ENCODE measurements at regions of chr3 and their contacts with region 1.

Region 1: DNA sequence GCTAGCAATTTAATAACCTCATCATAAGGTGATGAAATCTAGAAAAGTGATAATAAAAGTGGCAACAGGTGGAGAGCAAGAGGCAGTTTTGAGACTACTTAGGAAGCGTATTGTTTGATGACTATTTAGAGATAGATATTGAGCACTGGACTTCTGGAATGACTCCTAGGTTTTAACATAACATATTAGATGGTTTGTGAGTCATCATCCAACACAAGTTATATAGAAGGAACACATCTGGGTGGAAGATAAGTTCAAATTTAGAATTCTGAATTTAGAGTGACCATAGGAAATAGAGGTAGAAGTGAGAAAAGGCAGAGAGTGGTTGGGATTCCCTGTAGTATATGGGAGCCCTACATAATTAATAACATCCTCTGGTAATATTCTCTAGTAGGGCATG is 282.8 kb upstream of the ALCAM start:
- DNase-seq: no peak
- H3K4me3 ChIP-seq: no peak overlapping the region
- H3K4me3 Mint-ChIP-seq: no peak overlapping the region
- H3K27ac ChIP-seq: no peak overlapping the region
- H3K27ac Mint-ChIP-seq: no peak overlapping the region
- H3K4me1 ChIP-seq: no peaks in the 10 kb centered on the region
- H3K4me1 Mint-ChIP-seq: no peaks in the 10 kb centered on the region
- H3K27me3 ChIP-seq: no peaks in the 10 kb centered on the region
- H3K27me3 Mint-ChIP-seq: peaks cover 0 to 4% of the 10 kb centered on the region in 2 donors

Region 2: DNA sequence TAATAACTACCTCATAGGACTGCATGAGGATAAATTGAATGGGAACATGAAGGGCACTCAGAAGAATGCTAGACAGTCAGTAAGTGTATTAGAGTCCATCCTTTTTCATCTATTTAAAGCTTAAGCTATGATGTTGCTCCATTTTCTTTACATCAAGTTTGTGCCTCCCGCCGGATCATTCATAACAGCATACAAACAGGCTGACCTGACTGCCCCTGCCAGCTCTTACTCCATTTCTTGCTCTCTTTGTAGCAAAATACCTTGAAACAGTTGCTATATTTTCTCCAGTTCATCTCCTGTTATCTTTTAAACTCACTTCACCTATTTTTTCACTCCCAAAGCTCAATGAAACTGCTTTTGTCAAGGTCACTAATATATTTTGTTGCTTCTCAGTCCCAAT is 32.8 kb before region 1 on chr3:
- CTCF ChIA-PET with region 1: no interaction called
- POLR2A ChIA-PET with region 1: no interaction called
- DNase-seq: no peak
- H3K4me3 ChIP-seq: no peak overlapping the region
- H3K4me3 Mint-ChIP-seq: no peak overlapping the region
- H3K27ac ChIP-seq: no peak overlapping the region
- H3K27ac Mint-ChIP-seq: peak overlapping the region in 1 of 8 donors; percentile 8
- H3K4me1 ChIP-seq: no peaks in the 10 kb centered on the region
- H3K4me1 Mint-ChIP-seq: no peaks in the 10 kb centered on the region
- H3K27me3 ChIP-seq: no peaks in the 10 kb centered on the region
- H3K27me3 Mint-ChIP-seq: peaks cover 0 to 3% of the 10 kb centered on the region in 2 donors

Region 3: GRCh38 chr3:105062853-105063252 is 21.1 kb before region 1 on chr3:
- CTCF ChIA-PET with region 1: no interaction called
- POLR2A ChIA-PET with region 1: no interaction called
- DNase-seq: no peak
- H3K4me3 ChIP-seq: no peak overlapping the region
- H3K4me3 Mint-ChIP-seq: no peak overlapping the region
- H3K27ac ChIP-seq: no peak overlapping the region
- H3K27ac Mint-ChIP-seq: no peak overlapping the region
- H3K4me1 ChIP-seq: no peaks in the 10 kb centered on the region
- H3K4me1 Mint-ChIP-seq: no peaks in the 10 kb centered on the region
- H3K27me3 ChIP-seq: no peaks in the 10 kb centered on the region
- H3K27me3 Mint-ChIP-seq: peaks cover 2 to 6% of the 10 kb centered on the region in 2 donors

Region 4: GRCh38 chr3:105174017-105174615 is 90.2 kb after region 1 on chr3:
- CTCF ChIA-PET with region 1: no interaction called
- POLR2A ChIA-PET with region 1: interaction called, 12 read pairs
- DNase-seq: no peak
- H3K4me3 ChIP-seq: no peak overlapping the region
- H3K4me3 Mint-ChIP-seq: no peak overlapping the region
- H3K27ac ChIP-seq: no peak overlapping the region
- H3K27ac Mint-ChIP-seq: no peak overlapping the region
- H3K4me1 ChIP-seq: no peaks in the 10 kb centered on the region
- H3K4me1 Mint-ChIP-seq: no peaks in the 10 kb centered on the region
- H3K27me3 ChIP-seq: no peaks in the 10 kb centered on the region
- H3K27me3 Mint-ChIP-seq: peaks cover 2 to 10% of the 10 kb centered on the region in 2 donors

Region 5: DNA sequence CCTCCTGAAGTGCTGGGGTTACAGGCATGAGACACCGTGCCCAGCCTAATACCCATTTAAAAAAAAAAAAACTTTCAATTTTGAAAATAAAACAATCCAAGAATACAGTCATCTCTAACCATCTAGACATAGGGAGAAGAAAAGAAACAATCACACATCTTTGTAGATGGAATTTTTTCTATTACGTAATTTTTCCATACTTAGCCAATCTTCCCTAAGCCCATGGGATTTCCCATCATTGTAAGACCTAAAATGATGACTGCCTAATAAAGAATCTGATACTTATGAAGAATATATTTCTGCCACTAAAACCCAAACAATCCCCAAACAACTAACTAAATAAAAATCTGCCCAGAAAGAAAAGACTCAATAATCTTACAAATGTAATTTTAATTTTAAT is 696.2 kb after region 1 on chr3:
- CTCF ChIA-PET with region 1: no interaction called
- POLR2A ChIA-PET with region 1: no interaction called
- DNase-seq: no peak
- H3K4me3 ChIP-seq: no peak overlapping the region
- H3K4me3 Mint-ChIP-seq: no peak overlapping the region
- H3K27ac ChIP-seq: no peak overlapping the region
- H3K27ac Mint-ChIP-seq: peak overlapping the region in 4 of 8 donors; percentile 33 to 61 (median 38)
- H3K4me1 ChIP-seq: peaks cover 22% of the 10 kb centered on the region
- H3K4me1 Mint-ChIP-seq: peaks cover 70 to 82% (median 80%) of the 10 kb centered on the region in 3 donors
- H3K27me3 ChIP-seq: no peaks in the 10 kb centered on the region
- H3K27me3 Mint-ChIP-seq: no peaks in the 10 kb centered on the region

Measured in CD8-positive, alpha-beta memory T cell (primary cell).